CD8-positive, alpha-beta T cell (primary cell): ENCODE measurements at regions of chr5 and their contacts with region 1.

Region 1: GRCh38 chr5:1246711-1247431 is 21.7 kb downstream of the SLC6A18 start:
- DNase-seq: peak in 4 of 9 experiments; percentile 10 to 28 (median 20)
- ATAC-seq: no peak
- H3K4me3 ChIP-seq: no peak overlapping the region
- H3K4me3 Mint-ChIP-seq: no peak overlapping the region
- H3K27ac ChIP-seq: no peak overlapping the region
- H3K27ac Mint-ChIP-seq: no peak overlapping the region
- H3K4me1 ChIP-seq: no peaks in the 10 kb centered on the region
- H3K4me1 Mint-ChIP-seq: no peaks in the 10 kb centered on the region
- H3K27me3 ChIP-seq: peaks cover 0 to 3% of the 10 kb centered on the region in 2 experiments
- H3K27me3 Mint-ChIP-seq: peaks cover 12% of the 10 kb centered on the region
- CTCF ChIP-seq: no peak

Region 2: GRCh38 chr5:1409381-1410110 is 162.7 kb after region 1 on chr5:
- CTCF ChIA-PET with region 1: no interaction called
- POLR2A ChIA-PET with region 1: no interaction called
- intact Hi-C with region 1: loop called in 1 of 2 experiments (anchors 5 kb)
- DNase-seq: peak in 5 of 9 experiments; percentile 19 to 52 (median 38)
- ATAC-seq: peak; percentile 40
- H3K4me3 ChIP-seq: no peak overlapping the region
- H3K4me3 Mint-ChIP-seq: no peak overlapping the region
- H3K27ac ChIP-seq: no peak overlapping the region
- H3K27ac Mint-ChIP-seq: no peak overlapping the region
- H3K4me1 ChIP-seq: no peaks in the 10 kb centered on the region
- H3K4me1 Mint-ChIP-seq: no peaks in the 10 kb centered on the region
- H3K27me3 ChIP-seq: peaks cover 0 to 5% of the 10 kb centered on the region in 2 experiments
- H3K27me3 Mint-ChIP-seq: peaks cover 35% of the 10 kb centered on the region
- CTCF ChIP-seq: no peak